Activated naive CD4-positive, alpha-beta T cell treated with anti-CD3 and anti-CD28 coated beads for 36 hours (primary cell): ENCODE measurements at regions of chr4 and their contacts with region 1.

Region 1: GRCh38 chr4:69689599-69689998 is 36.6 kb upstream of the UGT2A1 start:
- DNase-seq: no peak
- H3K4me3 Mint-ChIP-seq: no peak overlapping the region
- H3K27ac Mint-ChIP-seq: no peak overlapping the region
- H3K4me1 Mint-ChIP-seq: peaks cover 3% of the 10 kb centered on the region
- H3K27me3 Mint-ChIP-seq: no peaks in the 10 kb centered on the region

Region 2: GRCh38 chr4:69322055-69322454 is 367.5 kb before region 1 on chr4:
- CTCF ChIA-PET with region 1: no interaction called
- intact Hi-C with region 1: loop called (anchors 5 kb)
- DNase-seq: no peak
- H3K4me3 Mint-ChIP-seq: no peak overlapping the region
- H3K27ac Mint-ChIP-seq: no peak overlapping the region
- H3K4me1 Mint-ChIP-seq: no peaks in the 10 kb centered on the region
- H3K27me3 Mint-ChIP-seq: no peaks in the 10 kb centered on the region

Region 3: DNA sequence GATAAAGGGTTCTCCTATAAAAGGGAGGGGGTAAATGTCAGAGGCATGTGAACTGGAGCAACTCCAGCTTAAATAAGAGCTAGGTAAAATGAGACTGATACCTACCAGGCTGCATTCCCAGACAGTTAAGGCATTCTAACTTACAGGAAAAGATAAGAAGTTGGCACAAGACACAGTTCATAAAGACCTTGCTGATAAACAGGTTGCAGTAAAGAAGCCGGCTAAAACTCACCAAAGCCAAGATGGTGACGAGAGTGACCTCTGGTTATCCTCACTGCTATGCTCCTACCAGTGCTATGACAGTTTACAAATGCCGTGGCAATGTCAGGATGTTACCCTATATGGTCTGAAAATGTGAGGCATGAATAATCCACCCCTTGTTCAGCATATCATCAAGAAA is 83.9 kb after region 1 on chr4:
- CTCF ChIA-PET with region 1: no interaction called
- intact Hi-C with region 1: no loop called
- DNase-seq: no peak
- H3K4me3 Mint-ChIP-seq: no peak overlapping the region
- H3K27ac Mint-ChIP-seq: no peak overlapping the region
- H3K4me1 Mint-ChIP-seq: peaks cover 2% of the 10 kb centered on the region
- H3K27me3 Mint-ChIP-seq: no peaks in the 10 kb centered on the region

Region 4: DNA sequence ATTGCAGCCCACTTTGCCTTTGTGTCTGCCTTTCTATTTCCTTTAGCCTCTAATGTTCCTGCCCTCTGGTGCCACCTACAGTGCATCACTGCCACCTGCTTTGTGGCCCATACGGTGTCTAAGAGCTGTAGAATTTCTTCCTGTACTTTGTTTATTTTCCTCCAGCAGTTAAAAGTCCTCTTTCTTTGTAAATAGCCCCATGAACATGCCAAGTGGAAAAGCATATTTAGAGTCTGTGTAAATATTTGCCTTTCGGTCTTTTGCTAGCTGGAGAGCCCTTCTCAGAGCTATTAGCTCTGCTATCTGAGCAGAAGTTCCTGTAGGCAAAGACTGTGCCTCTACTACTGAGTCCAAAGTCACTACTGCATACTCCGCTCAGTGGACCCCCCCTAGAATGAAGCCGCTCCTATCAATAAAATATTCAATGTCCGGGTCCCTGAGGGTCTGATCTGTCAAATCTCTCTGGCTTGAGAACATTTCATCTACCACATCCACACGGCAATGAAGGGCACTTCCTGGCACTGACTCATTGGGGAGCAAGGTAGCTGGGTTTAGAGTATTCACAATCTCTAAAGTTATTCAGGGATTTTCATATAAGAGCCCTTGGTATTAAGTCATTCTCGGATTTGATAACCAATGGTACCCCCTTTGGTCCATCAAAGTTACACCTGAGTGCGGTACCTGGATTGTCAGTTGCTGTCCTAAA is 134.0 kb after region 1 on chr4:
- CTCF ChIA-PET with region 1: interaction called, 15 read pairs
- intact Hi-C with region 1: loop called (anchors 1 kb)
- DNase-seq: peak; percentile 78
- H3K4me3 Mint-ChIP-seq: no peak overlapping the region
- H3K27ac Mint-ChIP-seq: no peak overlapping the region
- H3K4me1 Mint-ChIP-seq: peaks cover 6% of the 10 kb centered on the region
- H3K27me3 Mint-ChIP-seq: no peaks in the 10 kb centered on the region

Region 5: DNA sequence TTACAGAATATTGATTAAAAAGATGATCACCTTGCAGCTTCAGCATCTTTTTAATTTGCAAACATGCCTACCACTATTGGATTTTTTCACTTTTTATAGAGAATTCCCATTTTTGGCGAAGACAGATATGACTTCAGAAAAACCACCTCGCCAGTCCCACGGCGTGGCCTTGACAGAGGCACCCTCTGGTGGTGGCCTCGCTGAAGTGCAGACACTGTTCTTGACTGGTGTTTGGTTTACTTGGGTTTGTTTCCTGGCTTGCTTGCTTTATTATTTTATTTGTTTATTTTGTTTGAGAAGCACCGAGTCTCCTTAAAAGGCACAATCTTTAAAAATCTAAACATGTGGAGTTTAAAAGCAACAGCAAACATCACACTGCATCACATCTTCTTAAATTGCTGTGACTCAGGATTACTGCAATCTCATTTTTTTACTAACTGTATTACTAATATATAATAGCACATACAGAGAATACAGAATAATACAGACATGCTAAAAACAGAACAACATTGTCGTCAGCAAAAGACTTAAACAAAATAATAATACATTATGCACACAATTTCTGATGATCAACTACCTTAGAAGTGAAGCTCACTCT is 815.7 kb after region 1 on chr4:
- CTCF ChIA-PET with region 1: no interaction called
- intact Hi-C with region 1: loop called (anchors 1 kb)
- DNase-seq: peak; percentile 64
- H3K4me3 Mint-ChIP-seq: no peak overlapping the region
- H3K27ac Mint-ChIP-seq: no peak overlapping the region
- H3K4me1 Mint-ChIP-seq: no peaks in the 10 kb centered on the region
- H3K27me3 Mint-ChIP-seq: no peaks in the 10 kb centered on the region

Region 6: DNA sequence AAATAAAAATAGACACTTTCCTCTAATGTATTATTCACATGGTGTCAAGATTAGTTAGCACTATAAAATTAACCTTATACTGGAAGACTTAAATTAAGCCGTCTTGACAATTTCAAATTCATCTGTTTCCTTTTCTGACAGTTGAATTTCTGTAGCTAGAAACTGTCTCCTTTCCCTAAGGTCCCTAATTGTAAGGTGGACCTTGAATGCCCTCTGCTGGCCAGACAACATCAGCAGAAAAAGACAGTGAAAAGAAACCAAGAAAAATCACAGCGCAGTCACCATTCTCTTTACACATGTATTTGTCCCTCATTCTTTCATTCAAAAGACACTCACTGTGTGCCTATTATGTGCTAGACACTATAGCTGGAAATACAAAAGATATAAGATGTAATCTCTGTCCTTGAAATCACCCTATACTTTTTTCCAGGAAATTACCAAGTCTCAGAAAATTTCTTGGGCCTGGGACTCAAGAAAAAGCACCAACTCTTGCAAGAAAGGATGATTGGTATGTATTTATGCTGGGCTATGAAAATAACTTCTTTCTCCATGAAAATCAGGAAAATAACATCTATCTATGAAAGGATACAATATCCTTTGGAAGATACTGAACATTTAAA is 869.7 kb after region 1 on chr4:
- CTCF ChIA-PET with region 1: no interaction called
- intact Hi-C with region 1: loop called (anchors 1 kb)
- DNase-seq: peak; percentile 73
- H3K4me3 Mint-ChIP-seq: no peak overlapping the region
- H3K27ac Mint-ChIP-seq: no peak overlapping the region
- H3K4me1 Mint-ChIP-seq: peaks cover 9% of the 10 kb centered on the region
- H3K27me3 Mint-ChIP-seq: no peaks in the 10 kb centered on the region